A549 (cell line): ENCODE measurements at regions of chr17 and their contacts with region 1.

Region 1: GRCh38 chr17:37701496-37701898 is 43.4 kb downstream of the HNF1B start:
- DNase-seq: peak; percentile 50 to 75
- ATAC-seq: peak; percentile 67 to 84; a peak in 5 of 6 replicates
- H3K4me3 ChIP-seq: no peak overlapping the region
- H3K27ac ChIP-seq: peak overlapping the region; percentile 72 to 78
- H3K4me1 ChIP-seq: peaks cover 48% of the 10 kb centered on the region
- CTCF ChIP-seq: peak; percentile 94
- EP300 ChIP-seq: no peak
- POLR2A ChIP-seq: no peak
- RAD21 ChIP-seq: peak; percentile 82 to 85

Region 2: GRCh38 chr17:37671824-37672547 is 29.5 kb before region 1 on chr17:
- CTCF ChIA-PET with region 1: interaction called, 13 read pairs
- POLR2A ChIA-PET with region 1: no interaction called
- DNase-seq: peak; percentile 77 to 83
- ATAC-seq: peak; percentile 90 to 91
- H3K4me3 ChIP-seq: no peak overlapping the region
- H3K27ac ChIP-seq: peak overlapping the region; percentile 72 to 85
- H3K4me1 ChIP-seq: peaks cover 24% of the 10 kb centered on the region
- CTCF ChIP-seq: no peak
- EP300 ChIP-seq: 0 out of 5 replicates have a peak, but pooled peaks of 1 of the 2 experiments have one; percentile 40
- POLR2A ChIP-seq: no peak
- RAD21 ChIP-seq: no peak

Region 3: GRCh38 chr17:37683454-37683984 is 18.0 kb before region 1 on chr17:
- CTCF ChIA-PET with region 1: interaction called, 10 read pairs
- POLR2A ChIA-PET with region 1: no interaction called
- DNase-seq: no peak
- ATAC-seq: no peak
- H3K4me3 ChIP-seq: no peak overlapping the region
- H3K27ac ChIP-seq: no peak overlapping the region
- H3K4me1 ChIP-seq: peaks cover 7% of the 10 kb centered on the region; the same call in 2 of the 3 replicates
- CTCF ChIP-seq: no peak
- EP300 ChIP-seq: no peak
- POLR2A ChIP-seq: no peak
- RAD21 ChIP-seq: no peak